ENCODE measurements at regions of chr9 and their contacts with region 1.

Region 1: GRCh38 chr9:4382722-4383317 is 83.0 kb upstream of the GLIS3 start:
- DNase-seq: peak; percentile 49
- H3K4me3 ChIP-seq: no peak overlapping the region
- H3K27ac ChIP-seq: no peak overlapping the region
- H3K4me1 ChIP-seq: no peaks in the 10 kb centered on the region
- H3K27me3 ChIP-seq: no peaks in the 10 kb centered on the region
- CTCF ChIP-seq: peak; percentile 40
- POLR2A ChIP-seq: no peak

Region 2: DNA sequence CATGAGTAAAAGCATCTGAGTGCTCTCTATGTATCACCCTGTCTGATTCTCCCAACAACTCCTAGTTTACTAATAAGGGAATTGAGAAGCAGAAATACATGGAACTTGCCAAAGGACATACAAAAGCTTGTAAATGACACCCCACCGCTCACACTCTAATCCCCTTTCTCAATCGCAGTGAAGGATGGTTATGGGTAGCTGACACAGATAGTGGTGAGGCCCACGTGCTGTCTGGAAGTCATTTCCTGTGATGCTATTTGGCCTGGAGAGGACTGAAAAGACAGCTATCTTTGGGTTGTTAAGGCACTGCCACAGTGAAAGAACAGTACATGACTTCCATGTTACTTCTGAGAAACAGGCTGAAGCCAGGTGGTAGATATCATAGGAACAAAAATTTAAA is 200.0 kb before region 1 on chr9:
- CTCF ChIA-PET with region 1: no interaction called
- POLR2A ChIA-PET with region 1: no interaction called
- dilution Hi-C with region 1: no loop called
- intact Hi-C with region 1: no loop called
- DNase-seq: no peak
- H3K4me3 ChIP-seq: no peak overlapping the region
- H3K27ac ChIP-seq: no peak overlapping the region
- H3K4me1 ChIP-seq: no peaks in the 10 kb centered on the region
- H3K27me3 ChIP-seq: no peaks in the 10 kb centered on the region
- CTCF ChIP-seq: no peak
- POLR2A ChIP-seq: no peak

Region 3: DNA sequence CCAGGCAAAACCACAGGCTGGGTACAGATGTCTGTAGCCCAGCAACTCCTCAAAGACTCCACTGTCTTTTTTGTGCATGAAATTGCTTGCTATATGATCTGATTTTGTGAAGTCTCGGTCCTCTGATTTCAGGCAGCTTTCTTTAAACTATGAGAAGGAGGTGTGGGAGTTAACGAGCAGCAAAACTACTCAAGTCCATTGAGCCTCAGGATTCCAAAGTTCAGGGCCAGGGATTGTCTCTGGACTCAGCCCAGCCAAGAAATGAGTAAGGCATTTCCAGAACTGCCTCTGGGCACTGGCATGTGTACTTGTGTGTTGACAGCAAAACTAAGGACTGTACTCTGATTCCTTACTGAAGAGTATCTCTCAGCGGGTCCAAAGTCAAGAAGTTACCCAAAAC is 29.6 kb before region 1 on chr9:
- CTCF ChIA-PET with region 1: no interaction called
- POLR2A ChIA-PET with region 1: no interaction called
- dilution Hi-C with region 1: no loop called
- intact Hi-C with region 1: no loop called
- DNase-seq: no peak
- H3K4me3 ChIP-seq: no peak overlapping the region
- H3K27ac ChIP-seq: no peak overlapping the region
- H3K4me1 ChIP-seq: no peaks in the 10 kb centered on the region
- H3K27me3 ChIP-seq: peaks cover 0 to 6% of the 10 kb centered on the region in 2 experiments
- CTCF ChIP-seq: no peak
- POLR2A ChIP-seq: no peak

Region 4: GRCh38 chr9:4425319-4426045 is 42.7 kb after region 1 on chr9:
- CTCF ChIA-PET with region 1: interaction called, 3 read pairs
- POLR2A ChIA-PET with region 1: no interaction called
- dilution Hi-C with region 1: no loop called
- intact Hi-C with region 1: loop called (anchors 2 kb)
- DNase-seq: peak; percentile 63
- H3K4me3 ChIP-seq: no peak overlapping the region
- H3K27ac ChIP-seq: peak overlapping the region; percentile 64
- H3K4me1 ChIP-seq: peaks cover 30% of the 10 kb centered on the region
- H3K27me3 ChIP-seq: no peaks in the 10 kb centered on the region
- CTCF ChIP-seq: no peak
- POLR2A ChIP-seq: no peak

Region 5: DNA sequence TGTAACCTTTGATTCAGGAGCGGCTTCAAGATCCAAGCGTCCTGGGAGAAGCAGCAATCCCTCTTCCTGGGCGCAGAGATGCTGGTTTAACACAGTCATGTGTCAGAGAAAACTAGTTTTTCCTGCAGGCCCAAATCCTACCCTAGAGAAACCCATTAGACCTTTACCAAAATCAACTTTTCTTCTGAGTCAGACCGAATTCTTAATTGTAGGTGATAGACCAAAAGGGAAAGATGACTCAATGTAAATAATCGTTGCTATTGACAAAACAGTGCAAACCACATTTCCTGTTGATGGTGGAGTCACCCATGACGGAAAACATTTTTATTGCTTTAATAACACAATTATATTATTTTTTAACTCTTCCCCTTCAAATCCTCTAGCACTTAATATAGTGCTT is 147.6 kb after region 1 on chr9:
- CTCF ChIA-PET with region 1: no interaction called
- POLR2A ChIA-PET with region 1: no interaction called
- dilution Hi-C with region 1: no loop called
- intact Hi-C with region 1: no loop called
- DNase-seq: peak; percentile 80
- H3K4me3 ChIP-seq: peak overlapping the region in 1 of 3 experiments; percentile 28
- H3K27ac ChIP-seq: peak overlapping the region; percentile 96
- H3K4me1 ChIP-seq: peaks cover 26% of the 10 kb centered on the region
- H3K27me3 ChIP-seq: no peaks in the 10 kb centered on the region
- CTCF ChIP-seq: no peak
- POLR2A ChIP-seq: peak; percentile 19

Region 6: GRCh38 chr9:4548811-4549725 is 166.2 kb after region 1 on chr9:
- CTCF ChIA-PET with region 1: interaction called, 20 read pairs
- POLR2A ChIA-PET with region 1: no interaction called
- dilution Hi-C with region 1: no loop called
- intact Hi-C with region 1: loop called (anchors 1 kb)
- DNase-seq: peak; percentile 85
- H3K4me3 ChIP-seq: no peak overlapping the region
- H3K27ac ChIP-seq: no peak overlapping the region
- H3K4me1 ChIP-seq: peaks cover 41% of the 10 kb centered on the region
- H3K27me3 ChIP-seq: no peaks in the 10 kb centered on the region
- CTCF ChIP-seq: peak; percentile 44 to 53
- POLR2A ChIP-seq: no peak

Region 7: GRCh38 chr9:4604678-4605095 is 221.9 kb after region 1 on chr9:
- CTCF ChIA-PET with region 1: interaction called, 16 read pairs
- POLR2A ChIA-PET with region 1: no interaction called
- dilution Hi-C with region 1: no loop called
- intact Hi-C with region 1: no loop called
- DNase-seq: peak; percentile 83
- H3K4me3 ChIP-seq: no peak overlapping the region
- H3K27ac ChIP-seq: no peak overlapping the region
- H3K4me1 ChIP-seq: no peaks in the 10 kb centered on the region
- H3K27me3 ChIP-seq: no peaks in the 10 kb centered on the region
- CTCF ChIP-seq: peak; percentile 57 to 61
- POLR2A ChIP-seq: no peak

Region 8: GRCh38 chr9:4662108-4662988 is 279.5 kb after region 1 on chr9 and contains the start of gene PLPP6:
- CTCF ChIA-PET with region 1: interaction called, 6 read pairs
- POLR2A ChIA-PET with region 1: no interaction called
- dilution Hi-C with region 1: no loop called
- intact Hi-C with region 1: loop called (anchors 1 kb)
- DNase-seq: peak; percentile 76
- H3K4me3 ChIP-seq: peak within 1 kb of the TSS; percentile 57 to 81 (median 71)
- H3K27ac ChIP-seq: peak within 1 kb of the TSS; percentile 10
- H3K4me1 ChIP-seq: peaks cover 32% of the 10 kb centered on the region
- H3K27me3 ChIP-seq: no peaks in the 10 kb centered on the region
- CTCF ChIP-seq: peak; percentile 18 to 57
- POLR2A ChIP-seq: peak; percentile 74
- total RNA-seq, gene PLPP6: 5.4 and 6.4 TPM in 2 replicates

Region 9: DNA sequence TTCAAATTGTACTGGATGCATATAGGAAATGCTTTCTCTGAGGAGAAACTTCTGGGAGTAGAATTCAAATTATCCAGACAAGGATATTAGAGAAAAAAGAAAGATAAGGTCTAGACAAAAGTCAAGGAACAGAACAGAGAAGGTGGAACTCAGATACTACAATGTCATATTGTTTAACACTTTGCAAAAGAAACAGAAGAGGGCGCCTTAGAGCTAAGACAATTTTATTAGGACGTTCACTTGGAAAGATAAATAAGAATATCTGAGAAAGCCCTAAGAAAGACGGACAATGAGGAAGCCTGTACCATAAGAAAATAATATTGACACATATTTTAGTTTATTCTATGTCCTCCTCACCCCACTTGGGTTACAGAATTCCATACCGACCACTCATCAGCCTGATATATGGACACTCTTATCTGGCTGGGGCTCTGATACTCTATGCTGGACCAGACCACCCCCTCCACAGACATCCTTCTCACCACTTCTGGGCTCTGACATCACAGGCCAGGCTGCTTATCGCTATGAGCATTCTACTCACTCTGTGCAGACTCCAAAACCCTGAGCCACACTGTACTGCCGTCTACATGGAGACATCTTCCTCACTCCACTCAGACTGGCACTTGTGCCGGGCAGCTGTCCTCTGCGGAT is 367.3 kb after region 1 on chr9:
- CTCF ChIA-PET with region 1: interaction called, 7 read pairs
- POLR2A ChIA-PET with region 1: no interaction called
- dilution Hi-C with region 1: no loop called
- intact Hi-C with region 1: loop called (anchors 1 kb)
- DNase-seq: peak; percentile 57
- H3K4me3 ChIP-seq: no peak overlapping the region
- H3K27ac ChIP-seq: no peak overlapping the region
- H3K4me1 ChIP-seq: no peaks in the 10 kb centered on the region
- H3K27me3 ChIP-seq: no peaks in the 10 kb centered on the region
- CTCF ChIP-seq: peak; percentile 32 to 42
- POLR2A ChIP-seq: no peak